HCT116 (cell line): ENCODE measurements at regions of chr1 and their contacts with region 1.

Region 1: DNA sequence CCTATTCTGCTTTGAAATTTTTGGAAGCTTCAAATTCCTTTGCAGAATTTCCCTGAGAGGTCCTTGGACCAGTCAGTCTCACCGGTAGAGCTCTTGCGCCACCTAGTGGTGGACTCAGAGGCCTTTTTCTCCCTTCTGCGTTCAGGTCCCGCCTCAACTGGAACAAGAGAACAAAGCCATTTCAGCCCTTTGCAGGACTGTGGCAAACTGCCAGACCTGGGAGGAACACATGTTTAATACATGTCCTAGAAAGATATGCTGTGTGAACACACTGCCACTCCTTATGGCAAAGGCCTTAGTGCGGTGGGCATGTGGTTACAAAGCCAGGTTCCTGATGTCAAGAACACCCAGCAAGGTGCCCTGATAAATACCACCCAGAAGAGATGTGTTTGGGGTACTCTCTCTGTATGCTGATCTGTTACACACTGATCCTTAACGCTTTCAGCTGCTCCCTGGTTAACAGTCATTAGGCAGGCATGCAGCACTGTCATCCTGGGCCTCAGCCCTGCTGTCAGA is 82.2 kb upstream of the SSX2IP start:
- DNase-seq: peak; percentile 78
- ATAC-seq: peak; percentile 91
- H3K4me3 ChIP-seq: no peak overlapping the region
- H3K27ac ChIP-seq: no peak overlapping the region
- H3K4me1 ChIP-seq: no peaks in the 10 kb centered on the region
- H3K27me3 ChIP-seq: no peaks in the 10 kb centered on the region
- CTCF ChIP-seq: peak; percentile 70 to 97 (median 94)
- POLR2A ChIP-seq: no peak
- RAD21 ChIP-seq: peak; percentile 91

Region 2: GRCh38 chr1:83905315-83905907 is 867.1 kb before region 1 on chr1:
- CTCF ChIA-PET with region 1: no interaction called
- POLR2A ChIA-PET with region 1: no interaction called
- RAD21 ChIA-PET with region 1: no interaction called
- intact Hi-C with region 1: loop called (anchors 5 kb)
- DNase-seq: no peak
- ATAC-seq: no peak
- H3K4me3 ChIP-seq: no peak overlapping the region
- H3K27ac ChIP-seq: no peak overlapping the region
- H3K4me1 ChIP-seq: peaks cover 0 to 12% of the 10 kb centered on the region in 2 experiments; a peak in 2 of 4 replicates
- H3K27me3 ChIP-seq: no peaks in the 10 kb centered on the region
- CTCF ChIP-seq: peak; percentile 37 to 52 (median 42); a peak in 4 of 6 replicates
- POLR2A ChIP-seq: no peak
- RAD21 ChIP-seq: peak; percentile 48

Region 3: GRCh38 chr1:84037758-84038611 is 734.5 kb before region 1 on chr1:
- CTCF ChIA-PET with region 1: no interaction called
- POLR2A ChIA-PET with region 1: no interaction called
- RAD21 ChIA-PET with region 1: no interaction called
- intact Hi-C with region 1: no loop called
- DNase-seq: no peak
- ATAC-seq: no peak
- H3K4me3 ChIP-seq: no peak overlapping the region
- H3K27ac ChIP-seq: no peak overlapping the region
- H3K4me1 ChIP-seq: no peaks in the 10 kb centered on the region
- H3K27me3 ChIP-seq: no peaks in the 10 kb centered on the region
- CTCF ChIP-seq: no peak
- POLR2A ChIP-seq: no peak
- RAD21 ChIP-seq: no peak

Region 4: GRCh38 chr1:84442256-84442655 is 330.2 kb before region 1 on chr1:
- CTCF ChIA-PET with region 1: interaction called, 5 read pairs
- POLR2A ChIA-PET with region 1: no interaction called
- RAD21 ChIA-PET with region 1: no interaction called
- intact Hi-C with region 1: loop called (anchors 5 kb)
- DNase-seq: peak; percentile 67
- ATAC-seq: peak; percentile 93
- H3K4me3 ChIP-seq: no peak overlapping the region
- H3K27ac ChIP-seq: no peak overlapping the region
- H3K4me1 ChIP-seq: peaks cover 6 to 20% of the 10 kb centered on the region in 2 experiments; a peak in 3 of 4 replicates
- H3K27me3 ChIP-seq: no peaks in the 10 kb centered on the region
- CTCF ChIP-seq: peak; percentile 21 to 76 (median 57); a peak in 5 of 6 replicates
- POLR2A ChIP-seq: no peak
- RAD21 ChIP-seq: peak; percentile 85

Region 5: GRCh38 chr1:84847253-84848250 is 75.1 kb after region 1 on chr1:
- CTCF ChIA-PET with region 1: no interaction called
- POLR2A ChIA-PET with region 1: no interaction called
- RAD21 ChIA-PET with region 1: no interaction called
- intact Hi-C with region 1: no loop called
- DNase-seq: peak; percentile 62
- ATAC-seq: peak; percentile 76
- H3K4me3 ChIP-seq: no peak overlapping the region
- H3K27ac ChIP-seq: no peak overlapping the region
- H3K4me1 ChIP-seq: peaks cover 17 to 25% of the 10 kb centered on the region in 2 experiments
- H3K27me3 ChIP-seq: no peaks in the 10 kb centered on the region
- CTCF ChIP-seq: no peak
- POLR2A ChIP-seq: no peak
- RAD21 ChIP-seq: no peak